Activated B cell treated with CpG ODN at 0.5 μM for 24 hours (primary cell): ENCODE measurements at regions of chr12 and their contacts with region 1.

Region 1: GRCh38 chr12:69481133-69481532 is 10.9 kb downstream of the FRS2 start:
- DNase-seq: no peak
- ATAC-seq: no peak
- H3K4me3 Mint-ChIP-seq: no peak overlapping the region
- H3K27ac Mint-ChIP-seq: no peak overlapping the region
- H3K4me1 Mint-ChIP-seq: peaks cover 34% of the 10 kb centered on the region
- H3K27me3 Mint-ChIP-seq: no peaks in the 10 kb centered on the region
- CTCF ChIP-seq: no peak

Region 2: GRCh38 chr12:67541625-67541991 is 1939.5 kb before region 1 on chr12:
- CTCF ChIA-PET with region 1: no interaction called
- POLR2A ChIA-PET with region 1: no interaction called
- intact Hi-C with region 1: no loop called
- DNase-seq: no peak
- ATAC-seq: no peak
- H3K4me3 Mint-ChIP-seq: no peak overlapping the region
- H3K27ac Mint-ChIP-seq: no peak overlapping the region
- H3K4me1 Mint-ChIP-seq: peaks cover 6% of the 10 kb centered on the region
- H3K27me3 Mint-ChIP-seq: peaks cover 2% of the 10 kb centered on the region
- CTCF ChIP-seq: no peak

Region 3: GRCh38 chr12:69464428-69464827 is 16.7 kb before region 1 on chr12:
- CTCF ChIA-PET with region 1: no interaction called
- POLR2A ChIA-PET with region 1: interaction called, 7 read pairs
- intact Hi-C with region 1: loop called (anchors 2 kb)
- DNase-seq: no peak
- ATAC-seq: no peak
- H3K4me3 Mint-ChIP-seq: no peak overlapping the region
- H3K27ac Mint-ChIP-seq: no peak overlapping the region
- H3K4me1 Mint-ChIP-seq: peaks cover 26% of the 10 kb centered on the region
- H3K27me3 Mint-ChIP-seq: no peaks in the 10 kb centered on the region
- CTCF ChIP-seq: no peak

Region 4: DNA sequence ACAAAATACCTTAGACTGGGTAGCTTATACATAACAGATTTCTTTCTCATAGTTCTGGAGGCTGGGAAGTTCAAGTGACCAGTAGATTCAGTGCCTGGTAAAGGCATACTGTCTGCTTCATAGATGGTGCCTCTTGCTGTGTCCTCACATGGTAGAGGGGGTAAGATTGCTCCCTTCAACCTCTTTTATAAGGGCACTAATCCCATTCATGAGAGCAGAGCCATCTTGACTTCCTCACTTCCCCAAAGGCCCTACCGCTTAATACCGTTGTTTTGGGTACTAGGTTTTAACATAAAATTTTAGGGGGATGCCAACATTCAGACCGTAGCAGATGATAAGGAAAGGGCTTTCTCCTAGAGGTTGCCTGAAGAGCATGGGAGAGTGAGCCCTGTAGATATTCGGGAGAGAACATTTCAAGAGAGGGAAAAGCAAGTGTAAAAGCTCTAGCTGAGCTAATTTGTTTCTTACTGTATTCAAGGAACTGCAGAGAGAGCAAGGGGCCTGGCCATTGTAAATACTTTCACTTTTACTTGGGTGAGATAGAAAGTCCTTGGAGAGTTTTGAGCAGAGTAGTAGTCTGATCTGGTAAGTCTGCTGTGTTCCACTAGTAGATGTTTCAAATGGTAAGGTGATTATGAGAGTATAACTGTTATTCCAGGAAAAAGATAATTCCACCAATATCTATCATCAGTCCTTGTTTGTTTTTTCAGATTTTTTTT is 16.3 kb after region 1 on chr12:
- CTCF ChIA-PET with region 1: no interaction called
- POLR2A ChIA-PET with region 1: interaction called, 10 read pairs
- intact Hi-C with region 1: loop called (anchors 2 kb)
- DNase-seq: no peak
- ATAC-seq: peak; percentile 87
- H3K4me3 Mint-ChIP-seq: peak overlapping the region; percentile 52
- H3K27ac Mint-ChIP-seq: peak overlapping the region; percentile 79
- H3K4me1 Mint-ChIP-seq: peaks cover 51% of the 10 kb centered on the region
- H3K27me3 Mint-ChIP-seq: no peaks in the 10 kb centered on the region
- CTCF ChIP-seq: no peak

Region 5: GRCh38 chr12:69623970-69624369 is 142.8 kb after region 1 on chr12:
- CTCF ChIA-PET with region 1: no interaction called
- POLR2A ChIA-PET with region 1: no interaction called
- intact Hi-C with region 1: no loop called
- DNase-seq: no peak
- ATAC-seq: no peak
- H3K4me3 Mint-ChIP-seq: no peak overlapping the region
- H3K27ac Mint-ChIP-seq: no peak overlapping the region
- H3K4me1 Mint-ChIP-seq: no peaks in the 10 kb centered on the region
- H3K27me3 Mint-ChIP-seq: peaks cover 11% of the 10 kb centered on the region
- CTCF ChIP-seq: no peak